ENCODE measurements at regions of chr1 and their contacts with region 1.

Region 1: DNA sequence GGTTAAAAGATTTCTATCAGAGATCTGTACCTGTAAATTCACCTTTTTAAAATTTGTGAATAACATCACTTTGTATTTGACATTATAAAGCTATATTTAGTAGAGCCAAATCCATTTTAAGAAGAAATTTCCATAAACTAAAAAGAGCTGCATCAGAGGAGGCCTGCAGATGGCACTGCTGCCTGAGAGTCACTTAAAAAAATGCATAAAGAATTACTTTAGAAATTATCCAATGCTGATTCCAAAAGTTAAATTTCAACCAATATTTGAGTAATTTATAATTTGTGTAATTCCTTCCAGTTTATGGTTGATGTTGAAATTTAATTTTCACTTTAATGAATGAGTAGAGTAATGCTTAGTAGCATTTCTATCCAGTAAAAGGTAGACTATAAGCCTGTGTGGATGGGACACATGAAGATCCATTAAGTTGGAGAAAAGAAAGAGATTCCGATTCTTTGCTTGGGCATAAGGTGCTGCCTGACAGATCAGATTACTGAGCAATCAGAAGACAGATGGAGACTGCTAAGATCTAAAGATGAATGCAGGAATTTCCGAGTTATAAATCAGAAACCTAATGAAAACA is 20.7 kb upstream of the RPE65 start:
- DNase-seq: no peak

Region 2: GRCh38 chr1:68590473-68590872 is 120.0 kb after region 1 on chr1:
- CTCF ChIA-PET with region 1: interaction called, 12 read pairs
- POLR2A ChIA-PET with region 1: no interaction called
- DNase-seq: no peak

Measured in HEK293T (cell line).